ENCODE measurements at regions of chr3 and their contacts with region 1.

Region 1: DNA sequence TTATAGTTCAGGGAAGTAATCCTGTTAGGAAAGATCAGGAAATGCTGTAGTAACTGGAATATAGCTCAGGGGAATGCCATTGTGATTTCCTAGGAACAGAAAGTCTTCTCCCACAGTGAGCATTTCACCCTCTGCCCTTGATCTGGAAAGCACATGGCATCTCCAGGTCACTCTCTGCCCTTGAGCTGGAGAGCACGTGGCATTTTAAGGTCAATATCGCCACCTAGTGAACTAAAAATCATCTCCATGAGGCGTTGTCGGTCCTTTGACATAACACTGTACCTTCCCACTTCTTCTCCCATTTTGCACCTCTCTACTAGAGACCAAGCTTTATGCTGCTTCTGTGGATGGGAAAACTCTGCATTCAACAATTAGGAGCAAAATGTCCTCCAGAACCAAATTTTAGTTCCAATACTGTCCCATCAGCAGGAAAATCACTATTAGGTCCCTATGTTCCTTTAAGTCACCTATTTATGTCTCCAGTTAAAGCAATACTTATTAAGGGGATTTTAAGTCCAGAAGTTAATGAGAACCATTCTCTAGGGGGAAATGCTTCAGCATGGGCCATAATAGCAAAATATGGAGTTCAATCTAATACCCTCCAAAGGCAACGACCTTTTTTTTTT is 54.7 kb upstream of the GK5 start:
- DNase-seq: peak; percentile 65 to 80
- ATAC-seq: peak; percentile 99
- H3K4me3 ChIP-seq: no peak overlapping the region
- H3K27ac ChIP-seq: no peak overlapping the region
- H3K4me1 ChIP-seq: no peaks in the 10 kb centered on the region
- CTCF ChIP-seq: peak; percentile 82
- EP300 ChIP-seq: no peak
- POLR2A ChIP-seq: no peak
- RAD21 ChIP-seq: peak; percentile 89 to 95

Region 2: DNA sequence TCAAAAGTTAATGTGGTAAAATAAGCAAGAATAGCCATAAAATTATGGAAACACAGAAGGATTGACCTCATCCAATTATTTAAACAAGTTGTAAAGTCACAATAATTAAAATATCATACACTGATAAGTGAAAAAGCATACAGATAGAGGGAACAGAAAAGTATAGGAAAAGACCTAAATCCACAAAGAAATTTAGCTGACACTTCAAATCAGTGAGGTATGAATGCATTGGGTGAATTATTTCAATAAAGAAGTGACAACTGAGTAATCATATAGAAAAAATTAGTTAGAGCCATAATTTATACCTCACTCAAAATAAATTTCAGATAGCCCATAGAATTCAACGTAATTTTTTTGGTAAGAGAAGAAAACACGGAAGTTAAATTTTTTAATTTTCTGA is 155.8 kb before region 1 on chr3:
- CTCF ChIA-PET with region 1: interaction called, 41 read pairs
- POLR2A ChIA-PET with region 1: no interaction called
- DNase-seq: no peak
- ATAC-seq: no peak
- H3K4me3 ChIP-seq: no peak overlapping the region
- H3K27ac ChIP-seq: no peak overlapping the region
- H3K4me1 ChIP-seq: no peaks in the 10 kb centered on the region
- CTCF ChIP-seq: no peak
- EP300 ChIP-seq: no peak
- POLR2A ChIP-seq: no peak
- RAD21 ChIP-seq: no peak

Region 3: GRCh38 chr3:142129516-142130171 is 150.4 kb before region 1 on chr3:
- CTCF ChIA-PET with region 1: interaction called, 41 read pairs
- POLR2A ChIA-PET with region 1: no interaction called
- DNase-seq: no peak
- ATAC-seq: no peak
- H3K4me3 ChIP-seq: no peak overlapping the region
- H3K27ac ChIP-seq: no peak overlapping the region
- H3K4me1 ChIP-seq: no peaks in the 10 kb centered on the region
- CTCF ChIP-seq: no peak
- EP300 ChIP-seq: no peak
- POLR2A ChIP-seq: no peak
- RAD21 ChIP-seq: no peak

Region 4: DNA sequence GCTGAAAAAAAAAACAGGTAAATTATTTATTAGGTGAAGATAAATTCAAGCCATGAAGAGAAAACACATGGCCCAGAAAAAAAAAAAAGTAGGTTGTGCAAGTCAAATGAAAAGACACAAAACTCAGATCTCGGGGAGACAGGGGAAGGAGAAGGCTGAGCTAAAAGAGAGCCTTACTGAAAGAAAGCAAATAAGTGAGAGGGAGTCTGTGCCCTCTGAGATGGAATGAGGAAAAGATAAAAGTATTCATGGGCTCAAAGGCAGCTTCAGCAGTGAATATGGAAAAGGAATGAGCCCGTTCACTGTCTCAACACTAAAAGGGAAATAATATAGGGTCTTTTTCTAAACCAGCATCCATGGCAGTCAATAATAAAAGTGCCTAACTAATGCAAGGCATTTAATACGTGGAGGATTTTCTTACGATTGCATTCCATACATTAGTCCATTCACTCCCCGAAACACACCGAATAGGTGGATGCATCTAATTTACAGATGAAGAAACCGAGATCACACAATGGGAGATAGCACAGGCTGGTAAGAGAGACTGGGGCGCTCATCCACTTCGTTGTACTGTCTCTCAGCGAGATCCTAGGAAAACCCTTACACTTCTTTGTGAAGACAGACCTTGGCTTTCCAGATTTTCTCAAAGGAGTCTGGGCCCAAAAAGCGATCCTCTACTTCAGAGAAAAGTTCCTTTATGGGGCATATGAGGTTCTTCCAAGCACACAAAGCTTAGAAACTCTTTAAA is 131.9 kb before region 1 on chr3:
- CTCF ChIA-PET with region 1: no interaction called
- POLR2A ChIA-PET with region 1: no interaction called
- DNase-seq: no peak
- ATAC-seq: peak in 1 of 2 experiments; percentile 4; a peak in 1 of 6 replicates
- H3K4me3 ChIP-seq: peak overlapping the region; percentile 83
- H3K27ac ChIP-seq: peak overlapping the region; percentile 67 to 90
- H3K4me1 ChIP-seq: peaks cover 10% of the 10 kb centered on the region; the same call in 2 of the 3 replicates
- CTCF ChIP-seq: no peak
- EP300 ChIP-seq: no peak
- POLR2A ChIP-seq: no peak
- RAD21 ChIP-seq: no peak

Region 5: GRCh38 chr3:142180761-142181362 is 99.2 kb before region 1 on chr3:
- CTCF ChIA-PET with region 1: interaction called, 12 read pairs
- POLR2A ChIA-PET with region 1: interaction called, 3 read pairs
- DNase-seq: peak; percentile 30 to 38
- ATAC-seq: peak; percentile 77 to 87; a peak in 5 of 6 replicates
- H3K4me3 ChIP-seq: no peak overlapping the region
- H3K27ac ChIP-seq: no peak overlapping the region
- H3K4me1 ChIP-seq: no peaks in the 10 kb centered on the region
- CTCF ChIP-seq: peak; percentile 46
- EP300 ChIP-seq: no peak
- POLR2A ChIP-seq: no peak
- RAD21 ChIP-seq: peak; percentile 37 to 58; a peak in 3 of 5 replicates

Measured in A549 (cell line).